ENCODE measurements at regions of chr1 and their contacts with region 1.

Region 1: DNA sequence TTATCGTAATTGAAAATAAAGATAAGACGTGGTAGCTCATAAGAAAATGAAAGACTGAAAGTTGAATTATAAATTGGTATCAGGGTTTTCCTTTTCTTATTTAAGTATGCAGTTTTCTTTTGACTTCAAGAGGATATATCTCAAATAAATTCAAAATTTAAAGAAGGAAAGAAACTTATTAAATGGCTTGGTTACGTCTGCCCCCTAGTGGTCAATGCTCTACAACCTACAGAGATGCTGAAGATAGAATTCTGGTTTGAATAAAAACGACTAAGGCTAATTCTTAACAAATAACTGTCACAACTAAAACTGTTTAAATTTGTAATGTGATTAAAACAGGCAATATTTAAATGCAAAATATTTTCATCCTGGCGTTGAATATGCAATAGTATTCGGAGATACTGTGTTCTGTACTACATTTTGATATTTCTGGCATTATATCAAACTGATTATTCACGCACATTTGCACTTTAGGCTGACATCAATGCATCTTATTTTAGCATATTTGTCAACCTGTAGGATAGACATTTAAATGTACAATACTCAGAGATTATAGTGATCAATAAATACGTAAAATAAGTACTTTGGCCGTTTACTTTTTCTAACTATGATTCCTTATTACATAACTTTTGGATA is 26.8 kb downstream of the IFI44 start:
- DNase-seq: peak; percentile 77
- ATAC-seq: no peak
- H3K4me3 Mint-ChIP-seq: no peak overlapping the region
- H3K27ac Mint-ChIP-seq: no peak overlapping the region
- H3K4me1 Mint-ChIP-seq: peaks cover 31% of the 10 kb centered on the region
- H3K27me3 Mint-ChIP-seq: peaks cover 6% of the 10 kb centered on the region

Region 2: GRCh38 chr1:78577257-78578100 is 99.0 kb before region 1 on chr1:
- CTCF ChIA-PET with region 1: no interaction called
- POLR2A ChIA-PET with region 1: no interaction called
- DNase-seq: no peak
- ATAC-seq: no peak
- H3K4me3 Mint-ChIP-seq: no peak overlapping the region
- H3K27ac Mint-ChIP-seq: no peak overlapping the region
- H3K4me1 Mint-ChIP-seq: no peaks in the 10 kb centered on the region
- H3K27me3 Mint-ChIP-seq: no peaks in the 10 kb centered on the region

Region 3: GRCh38 chr1:78607334-78607927 is 69.0 kb before region 1 on chr1:
- CTCF ChIA-PET with region 1: interaction called, 11 read pairs
- POLR2A ChIA-PET with region 1: no interaction called
- DNase-seq: no peak
- ATAC-seq: no peak
- H3K4me3 Mint-ChIP-seq: no peak overlapping the region
- H3K27ac Mint-ChIP-seq: no peak overlapping the region
- H3K4me1 Mint-ChIP-seq: no peaks in the 10 kb centered on the region
- H3K27me3 Mint-ChIP-seq: peaks cover 26% of the 10 kb centered on the region

Region 4: GRCh38 chr1:78664763-78665162 is 11.7 kb before region 1 on chr1:
- CTCF ChIA-PET with region 1: interaction called, 21 read pairs
- POLR2A ChIA-PET with region 1: no interaction called
- DNase-seq: no peak
- ATAC-seq: no peak
- H3K4me3 Mint-ChIP-seq: no peak overlapping the region
- H3K27ac Mint-ChIP-seq: no peak overlapping the region
- H3K4me1 Mint-ChIP-seq: peaks cover 16% of the 10 kb centered on the region
- H3K27me3 Mint-ChIP-seq: no peaks in the 10 kb centered on the region

Region 5: DNA sequence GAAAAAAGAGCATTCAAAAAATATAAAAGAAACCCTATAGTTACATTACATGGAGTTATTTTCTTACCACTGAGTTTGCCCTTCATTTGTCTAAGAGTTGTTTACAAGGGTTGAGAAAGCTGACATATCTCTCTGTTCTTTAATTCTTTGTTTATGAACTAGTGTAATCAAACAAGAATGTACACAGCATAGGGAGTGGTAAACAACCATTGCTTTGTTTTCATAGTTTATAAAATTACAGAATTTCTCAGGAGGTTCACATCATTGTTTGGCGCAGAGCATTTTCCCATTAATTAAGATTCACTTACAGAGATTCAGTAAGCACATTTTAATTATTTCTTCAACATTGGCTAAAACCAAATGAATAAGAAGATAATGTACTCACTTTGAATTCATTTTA is 60.8 kb after region 1 on chr1:
- CTCF ChIA-PET with region 1: no interaction called
- POLR2A ChIA-PET with region 1: no interaction called
- DNase-seq: no peak
- ATAC-seq: no peak
- H3K4me3 Mint-ChIP-seq: no peak overlapping the region
- H3K27ac Mint-ChIP-seq: no peak overlapping the region
- H3K4me1 Mint-ChIP-seq: no peaks in the 10 kb centered on the region
- H3K27me3 Mint-ChIP-seq: peaks cover 4% of the 10 kb centered on the region